ENCODE measurements at regions of chr12 and their contacts with region 1.

Region 1: GRCh38 chr12:109597795-109598427 is 24.3 kb downstream of the MVK start:
- DNase-seq: peak; percentile 70
- ATAC-seq: peak; percentile 45
- H3K4me3 Mint-ChIP-seq: no peak overlapping the region
- H3K27ac Mint-ChIP-seq: no peak overlapping the region
- H3K4me1 Mint-ChIP-seq: peaks cover 29% of the 10 kb centered on the region
- H3K27me3 Mint-ChIP-seq: no peaks in the 10 kb centered on the region

Region 2: GRCh38 chr12:109557805-109558204 is 40.1 kb before region 1 on chr12:
- CTCF ChIA-PET with region 1: no interaction called
- POLR2A ChIA-PET with region 1: no interaction called
- DNase-seq: no peak
- ATAC-seq: no peak
- H3K4me3 Mint-ChIP-seq: no peak overlapping the region
- H3K27ac Mint-ChIP-seq: no peak overlapping the region
- H3K4me1 Mint-ChIP-seq: no peaks in the 10 kb centered on the region
- H3K27me3 Mint-ChIP-seq: no peaks in the 10 kb centered on the region

Region 3: GRCh38 chr12:109573029-109573913 is 24.6 kb before region 1 on chr12 and contains the starts of genes MMAB and MVK:
- CTCF ChIA-PET with region 1: interaction called, 17 read pairs
- POLR2A ChIA-PET with region 1: interaction called, 3 read pairs
- DNase-seq: peak; percentile 100
- ATAC-seq: peak; percentile 96
- H3K4me3 Mint-ChIP-seq: peak within 1 kb of the TSS; percentile 86
- H3K27ac Mint-ChIP-seq: peak within 1 kb of the TSS; percentile 97
- H3K4me1 Mint-ChIP-seq: peaks cover 26% of the 10 kb centered on the region
- H3K27me3 Mint-ChIP-seq: no peaks in the 10 kb centered on the region
- total RNA-seq, gene MMAB: 42.8 to 44.3 TPM
- total RNA-seq, gene MVK: 25.0 to 28.5 TPM

Region 4: GRCh38 chr12:109586385-109587296 is 11.3 kb before region 1 on chr12:
- CTCF ChIA-PET with region 1: interaction called, 17 read pairs
- POLR2A ChIA-PET with region 1: interaction called, 3 read pairs
- DNase-seq: no peak
- ATAC-seq: no peak
- H3K4me3 Mint-ChIP-seq: no peak overlapping the region
- H3K27ac Mint-ChIP-seq: no peak overlapping the region
- H3K4me1 Mint-ChIP-seq: no peaks in the 10 kb centered on the region
- H3K27me3 Mint-ChIP-seq: no peaks in the 10 kb centered on the region

Region 5: DNA sequence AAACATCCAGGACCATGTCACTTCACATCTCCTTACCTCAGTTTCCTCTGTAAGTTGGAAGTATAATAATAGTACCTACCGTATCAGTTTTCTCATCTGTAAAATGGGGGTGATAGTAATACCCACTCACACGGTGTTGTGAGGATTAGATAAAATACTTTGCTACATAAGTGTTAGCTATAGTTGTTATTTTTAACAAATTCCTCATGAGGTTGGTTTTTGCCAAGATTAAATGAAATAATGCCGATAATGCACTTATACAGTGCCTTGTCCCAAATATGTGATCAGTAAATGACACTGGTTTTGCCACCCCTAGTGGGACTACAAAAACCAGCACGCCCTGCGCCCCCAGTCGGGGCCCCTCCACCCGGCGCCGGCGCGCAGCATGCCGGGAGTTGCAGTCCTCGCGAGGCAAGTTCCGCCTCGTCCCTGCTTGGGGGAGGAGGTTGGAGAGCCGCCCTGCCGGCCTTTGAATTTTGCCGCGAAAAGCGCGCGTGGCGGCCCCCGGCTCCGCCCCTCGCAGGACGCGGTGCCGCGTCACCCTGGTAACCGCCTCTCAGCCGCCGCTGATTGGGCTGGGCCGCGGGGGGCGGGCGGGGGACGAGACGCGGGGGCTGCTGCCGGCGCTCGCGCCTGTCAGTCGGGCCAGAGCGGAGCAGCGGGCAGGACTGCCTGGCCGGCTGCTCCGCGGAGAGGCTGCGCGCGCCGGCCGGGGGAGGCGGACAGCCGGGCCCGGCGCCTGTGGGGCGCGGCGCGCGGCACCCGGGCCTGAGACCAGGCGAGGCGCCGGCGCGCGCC is 115.5 kb after region 1 on chr12 and contains the start of gene FAM222A:
- CTCF ChIA-PET with region 1: interaction called, 11 read pairs
- POLR2A ChIA-PET with region 1: no interaction called
- DNase-seq: peak; percentile 96
- ATAC-seq: peak; percentile 88
- H3K4me3 Mint-ChIP-seq: peak within 1 kb of the TSS; percentile 69
- H3K27ac Mint-ChIP-seq: no peak within 1 kb of the TSS
- H3K4me1 Mint-ChIP-seq: peaks cover 9% of the 10 kb centered on the region
- H3K27me3 Mint-ChIP-seq: peaks cover 21% of the 10 kb centered on the region
- total RNA-seq, gene FAM222A: 1.6 to 1.9 TPM

Region 6: GRCh38 chr12:109775172-109775881 is 177.4 kb after region 1 on chr12:
- CTCF ChIA-PET with region 1: interaction called, 32 read pairs
- POLR2A ChIA-PET with region 1: interaction called, 3 read pairs
- DNase-seq: peak; percentile 81
- ATAC-seq: peak; percentile 84
- H3K4me3 Mint-ChIP-seq: no peak overlapping the region
- H3K27ac Mint-ChIP-seq: no peak overlapping the region
- H3K4me1 Mint-ChIP-seq: peaks cover 16% of the 10 kb centered on the region
- H3K27me3 Mint-ChIP-seq: no peaks in the 10 kb centered on the region

Region 7: GRCh38 chr12:109789526-109790048 is 191.7 kb after region 1 on chr12:
- CTCF ChIA-PET with region 1: no interaction called
- POLR2A ChIA-PET with region 1: no interaction called
- DNase-seq: no peak
- ATAC-seq: no peak
- H3K4me3 Mint-ChIP-seq: no peak overlapping the region
- H3K27ac Mint-ChIP-seq: no peak overlapping the region
- H3K4me1 Mint-ChIP-seq: no peaks in the 10 kb centered on the region
- H3K27me3 Mint-ChIP-seq: peaks cover 6% of the 10 kb centered on the region

Measured in activated CD8-positive, alpha-beta T cell treated with anti-CD3 and anti-CD28 coated beads, Interleukin-2, amount 10 ng/mL, durations not matched to agents 7 days and 5 days (primary cell).